Left ventricle myocardium superior (tissue), 1 donor: ENCODE measurements at regions of chr22 and their contacts with region 1.

Region 1: GRCh38 chr22:31345331-31346254 is 553 bp downstream of the PATZ1 start:
- DNase-seq: peak; percentile 94
- ATAC-seq: peak; percentile 74

Region 2: DNA sequence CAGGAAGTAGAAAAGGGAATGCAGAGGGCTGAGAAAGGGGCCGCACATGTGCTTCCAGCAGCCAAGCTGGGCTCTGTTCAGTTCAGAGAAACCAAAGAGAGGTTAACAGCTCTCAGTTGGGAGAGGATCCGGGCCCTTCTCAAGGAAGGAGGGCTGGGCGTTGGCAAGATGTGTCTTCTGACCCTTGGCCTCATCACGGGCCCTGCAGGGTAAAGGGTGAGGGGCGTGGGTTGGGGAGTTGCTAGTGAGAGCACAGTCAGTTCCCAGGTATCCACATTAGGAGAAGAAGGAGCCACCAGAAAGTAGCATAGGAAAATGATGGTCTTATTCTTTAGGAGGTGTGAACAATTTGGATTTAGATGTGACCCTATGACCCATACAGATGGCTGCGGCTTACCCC is 577.9 kb before region 1 on chr22:
- intact Hi-C with region 1: no loop called
- DNase-seq: no peak
- ATAC-seq: no peak

Region 3: DNA sequence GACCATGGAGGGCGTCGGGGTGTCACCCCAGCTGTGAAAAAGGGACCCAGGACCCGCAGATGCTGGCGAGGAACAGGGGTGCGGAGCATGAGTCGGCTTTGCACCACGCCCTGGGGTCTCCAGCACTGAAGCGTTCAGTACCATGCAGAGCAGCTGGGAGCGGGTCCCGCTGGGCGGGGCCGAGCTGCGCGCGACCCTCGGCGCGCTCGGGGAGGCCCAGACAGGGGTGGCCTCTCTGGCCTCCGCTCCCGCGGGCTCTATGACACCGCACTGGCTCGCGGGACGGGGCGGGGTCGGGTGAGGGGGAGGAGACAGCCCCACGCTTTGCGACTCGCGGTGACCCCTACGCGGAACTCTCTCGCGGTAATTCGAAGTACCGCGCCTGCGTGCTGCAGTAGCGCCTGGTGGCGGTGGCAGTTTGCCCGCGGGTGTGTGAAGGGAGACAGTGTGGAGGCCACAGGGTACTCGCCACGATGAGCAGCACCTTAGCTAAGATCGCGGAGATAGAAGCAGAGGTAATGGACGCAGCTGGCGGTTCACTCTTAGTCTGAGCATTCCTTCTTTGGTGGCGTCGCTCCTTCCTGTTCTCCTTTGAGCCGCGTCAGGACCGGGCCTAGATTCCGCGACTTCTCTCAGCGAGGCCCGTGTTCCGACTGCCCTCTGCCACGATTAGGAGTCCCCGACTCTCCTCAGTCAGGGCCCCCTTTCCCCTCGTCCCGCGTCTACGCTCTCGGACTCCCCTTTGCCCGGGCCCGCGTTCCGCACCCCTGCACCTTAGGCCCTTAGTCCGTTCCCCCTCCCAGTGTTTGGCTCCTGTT is 53.8 kb after region 1 on chr22 and contains the start of gene DRG1:
- intact Hi-C with region 1: loop called (anchors 10 kb)
- DNase-seq: peak; percentile 99
- ATAC-seq: peak; percentile 99
- total RNA-seq, gene DRG1: 67.4 TPM